ENCODE measurements at regions of chr18 and their contacts with region 1.

Region 1: DNA sequence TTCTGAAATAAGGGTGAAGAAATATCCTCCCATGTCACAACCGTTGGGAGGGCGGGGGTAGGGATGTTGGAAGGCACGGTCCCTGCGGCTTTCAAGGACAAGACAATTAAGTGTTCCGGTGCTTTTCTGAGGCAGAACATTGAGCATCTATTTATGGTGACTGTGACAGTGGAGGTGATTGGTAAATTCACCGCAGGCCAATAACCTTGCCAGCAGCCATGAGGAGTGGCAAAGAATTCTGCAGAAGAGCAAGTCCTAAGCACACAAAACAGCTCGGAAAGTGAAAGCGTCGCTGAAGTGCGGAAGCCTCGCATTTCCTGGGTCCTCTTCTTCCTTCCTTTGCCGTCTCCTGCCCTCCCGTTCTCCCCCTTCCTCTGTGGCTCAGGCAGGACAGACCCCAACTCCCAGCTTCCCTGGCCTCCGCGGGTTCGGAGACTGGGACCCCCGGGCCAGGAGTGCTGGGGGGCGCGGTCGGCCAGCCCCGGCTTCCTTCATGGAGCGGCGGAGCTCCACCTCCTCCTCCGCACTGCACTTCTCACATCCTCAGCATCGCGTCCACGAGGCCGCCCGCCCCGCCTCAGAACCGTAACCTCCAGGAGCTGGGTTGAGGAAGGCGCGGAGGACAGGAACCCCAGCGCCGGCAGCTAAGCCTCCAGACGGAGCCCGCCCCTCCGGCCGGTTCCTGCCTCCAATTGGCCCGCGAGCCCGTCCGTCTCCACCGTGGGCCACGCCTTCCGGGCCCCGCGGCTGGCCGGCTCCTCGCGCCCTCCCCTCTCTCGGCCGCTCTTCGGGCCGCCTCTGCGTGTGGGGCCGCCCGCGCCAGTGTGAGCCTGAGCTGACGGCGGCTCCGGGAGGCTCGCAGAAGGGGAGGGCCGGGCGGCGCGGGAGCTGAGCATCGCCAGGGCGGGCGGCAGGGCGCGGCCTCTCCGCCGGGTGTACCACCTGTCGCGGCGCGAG is at the start of gene ME2:
- DNase-seq: peak; percentile 98
- ATAC-seq: peak; percentile 94
- H3K4me3 Mint-ChIP-seq: peak within 1 kb of the TSS; percentile 98
- H3K27ac Mint-ChIP-seq: peak within 1 kb of the TSS; percentile 97
- H3K4me1 Mint-ChIP-seq: peaks cover 31% of the 10 kb centered on the region
- H3K27me3 Mint-ChIP-seq: no peaks in the 10 kb centered on the region
- CTCF ChIP-seq: no peak
- total RNA-seq, gene ME2: 58.2 and 63.5 TPM in 2 replicates

Region 2: GRCh38 chr18:50830544-50830943 is 48.1 kb before region 1 on chr18:
- CTCF ChIA-PET with region 1: no interaction called
- POLR2A ChIA-PET with region 1: interaction called, 19 read pairs
- intact Hi-C with region 1: no loop called
- DNase-seq: no peak
- ATAC-seq: peak; percentile 84
- H3K4me3 Mint-ChIP-seq: peak overlapping the region; percentile 11
- H3K27ac Mint-ChIP-seq: peak overlapping the region; percentile 71
- H3K4me1 Mint-ChIP-seq: peaks cover 27% of the 10 kb centered on the region
- H3K27me3 Mint-ChIP-seq: no peaks in the 10 kb centered on the region
- CTCF ChIP-seq: no peak

Region 3: GRCh38 chr18:50902797-50903196 is 24.2 kb after region 1 on chr18:
- CTCF ChIA-PET with region 1: no interaction called
- POLR2A ChIA-PET with region 1: interaction called, 7 read pairs
- intact Hi-C with region 1: loop called (anchors 1 kb)
- DNase-seq: no peak
- ATAC-seq: no peak
- H3K4me3 Mint-ChIP-seq: no peak overlapping the region
- H3K27ac Mint-ChIP-seq: no peak overlapping the region
- H3K4me1 Mint-ChIP-seq: peaks cover 20% of the 10 kb centered on the region
- H3K27me3 Mint-ChIP-seq: no peaks in the 10 kb centered on the region
- CTCF ChIP-seq: no peak

Region 4: GRCh38 chr18:50967714-50968661 is 89.4 kb after region 1 on chr18 and contains the start of gene ELAC1:
- CTCF ChIA-PET with region 1: no interaction called
- POLR2A ChIA-PET with region 1: interaction called, 53 read pairs
- intact Hi-C with region 1: loop called (anchors 1 kb)
- DNase-seq: peak; percentile 75
- ATAC-seq: peak; percentile 95
- H3K4me3 Mint-ChIP-seq: peak within 1 kb of the TSS; percentile 92
- H3K27ac Mint-ChIP-seq: peak within 1 kb of the TSS; percentile 89
- H3K4me1 Mint-ChIP-seq: peaks cover 11% of the 10 kb centered on the region
- H3K27me3 Mint-ChIP-seq: no peaks in the 10 kb centered on the region
- CTCF ChIP-seq: no peak
- total RNA-seq, gene ELAC1: 9.7 and 14.0 TPM in 2 replicates

Region 5: GRCh38 chr18:51153659-51154371 is 275.2 kb after region 1 on chr18:
- CTCF ChIA-PET with region 1: no interaction called
- POLR2A ChIA-PET with region 1: interaction called, 4 read pairs
- intact Hi-C with region 1: loop called (anchors 1 kb)
- DNase-seq: peak; percentile 66
- ATAC-seq: peak; percentile 76
- H3K4me3 Mint-ChIP-seq: peak overlapping the region; percentile 86
- H3K27ac Mint-ChIP-seq: peak overlapping the region; percentile 99
- H3K4me1 Mint-ChIP-seq: peaks cover 54% of the 10 kb centered on the region
- H3K27me3 Mint-ChIP-seq: no peaks in the 10 kb centered on the region
- CTCF ChIP-seq: no peak

Region 6: GRCh38 chr18:51537487-51537886 is 658.9 kb after region 1 on chr18:
- CTCF ChIA-PET with region 1: no interaction called
- POLR2A ChIA-PET with region 1: no interaction called
- intact Hi-C with region 1: no loop called
- DNase-seq: no peak
- ATAC-seq: no peak
- H3K4me3 Mint-ChIP-seq: no peak overlapping the region
- H3K27ac Mint-ChIP-seq: no peak overlapping the region
- H3K4me1 Mint-ChIP-seq: peaks cover 5% of the 10 kb centered on the region
- H3K27me3 Mint-ChIP-seq: peaks cover 7% of the 10 kb centered on the region
- CTCF ChIP-seq: no peak